GM12878 (cell line): ENCODE measurements at regions of chr14 and their contacts with region 1.

Region 1: GRCh38 chr14:33647385-33647786 is 303.5 kb downstream of the EGLN3 start:
- DNase-seq: no peak
- ATAC-seq: no peak
- H3K4me3 ChIP-seq: no peak overlapping the region
- H3K27ac ChIP-seq: no peak overlapping the region
- H3K4me1 ChIP-seq: no peaks in the 10 kb centered on the region
- H3K27me3 ChIP-seq: no peaks in the 10 kb centered on the region
- CTCF ChIP-seq: no peak
- EP300 ChIP-seq: no peak
- POLR2A ChIP-seq: no peak
- RAD21 ChIP-seq: no peak

Region 2: GRCh38 chr14:33631456-33631855 is 15.9 kb before region 1 on chr14:
- CTCF ChIA-PET with region 1: interaction called, 4 read pairs
- POLR2A ChIA-PET with region 1: interaction called, 9 read pairs
- RAD21 ChIA-PET with region 1: interaction called, 6 read pairs
- SMC1A ChIA-PET with region 1: interaction called, 61 read pairs
- in situ Hi-C with region 1: no loop called
- intact Hi-C with region 1: no loop called
- DNase-seq: no peak
- ATAC-seq: no peak
- H3K4me3 ChIP-seq: no peak overlapping the region
- H3K27ac ChIP-seq: no peak overlapping the region
- H3K4me1 ChIP-seq: no peaks in the 10 kb centered on the region
- H3K27me3 ChIP-seq: no peaks in the 10 kb centered on the region
- CTCF ChIP-seq: no peak
- EP300 ChIP-seq: no peak
- POLR2A ChIP-seq: no peak
- RAD21 ChIP-seq: no peak

Region 3: DNA sequence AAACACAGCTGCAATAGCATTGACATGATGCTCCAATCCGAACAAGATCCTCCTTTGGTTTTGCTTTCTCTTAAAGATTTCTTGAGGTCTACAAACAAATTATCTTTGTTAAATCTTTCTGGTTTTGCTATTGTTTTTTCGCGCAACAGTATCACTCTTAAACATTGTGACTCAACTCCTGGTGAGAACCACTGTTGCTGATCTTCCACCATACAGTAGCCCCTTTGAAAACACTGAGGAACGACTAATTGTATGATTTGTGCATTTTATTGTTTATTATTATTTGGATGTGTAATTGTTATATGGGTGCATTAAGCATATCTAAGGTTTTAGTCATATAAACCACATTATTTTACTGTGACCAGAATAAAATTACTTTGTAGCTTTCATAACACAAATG is 20.7 kb after region 1 on chr14:
- CTCF ChIA-PET with region 1: interaction called, 5 read pairs
- POLR2A ChIA-PET with region 1: interaction called, 3 read pairs
- RAD21 ChIA-PET with region 1: interaction called, 97 read pairs
- SMC1A ChIA-PET with region 1: interaction called, 96 read pairs
- in situ Hi-C with region 1: no loop called
- intact Hi-C with region 1: no loop called
- DNase-seq: no peak
- ATAC-seq: no peak
- H3K4me3 ChIP-seq: no peak overlapping the region
- H3K27ac ChIP-seq: no peak overlapping the region
- H3K4me1 ChIP-seq: no peaks in the 10 kb centered on the region
- H3K27me3 ChIP-seq: no peaks in the 10 kb centered on the region
- CTCF ChIP-seq: no peak
- EP300 ChIP-seq: no peak
- POLR2A ChIP-seq: no peak
- RAD21 ChIP-seq: no peak

Region 4: GRCh38 chr14:34387974-34388516 is 740.7 kb after region 1 on chr14:
- CTCF ChIA-PET with region 1: no interaction called
- POLR2A ChIA-PET with region 1: no interaction called
- RAD21 ChIA-PET with region 1: no interaction called
- SMC1A ChIA-PET with region 1: no interaction called
- in situ Hi-C with region 1: no loop called
- intact Hi-C with region 1: no loop called
- DNase-seq: no peak
- ATAC-seq: no peak
- H3K4me3 ChIP-seq: no peak overlapping the region
- H3K27ac ChIP-seq: no peak overlapping the region
- H3K4me1 ChIP-seq: no peaks in the 10 kb centered on the region
- H3K27me3 ChIP-seq: no peaks in the 10 kb centered on the region
- CTCF ChIP-seq: no peak
- EP300 ChIP-seq: no peak
- POLR2A ChIP-seq: no peak
- RAD21 ChIP-seq: no peak